Mammary epithelial cell (primary cell): ENCODE measurements at regions of chr2 and their contacts with region 1.

Region 1: DNA sequence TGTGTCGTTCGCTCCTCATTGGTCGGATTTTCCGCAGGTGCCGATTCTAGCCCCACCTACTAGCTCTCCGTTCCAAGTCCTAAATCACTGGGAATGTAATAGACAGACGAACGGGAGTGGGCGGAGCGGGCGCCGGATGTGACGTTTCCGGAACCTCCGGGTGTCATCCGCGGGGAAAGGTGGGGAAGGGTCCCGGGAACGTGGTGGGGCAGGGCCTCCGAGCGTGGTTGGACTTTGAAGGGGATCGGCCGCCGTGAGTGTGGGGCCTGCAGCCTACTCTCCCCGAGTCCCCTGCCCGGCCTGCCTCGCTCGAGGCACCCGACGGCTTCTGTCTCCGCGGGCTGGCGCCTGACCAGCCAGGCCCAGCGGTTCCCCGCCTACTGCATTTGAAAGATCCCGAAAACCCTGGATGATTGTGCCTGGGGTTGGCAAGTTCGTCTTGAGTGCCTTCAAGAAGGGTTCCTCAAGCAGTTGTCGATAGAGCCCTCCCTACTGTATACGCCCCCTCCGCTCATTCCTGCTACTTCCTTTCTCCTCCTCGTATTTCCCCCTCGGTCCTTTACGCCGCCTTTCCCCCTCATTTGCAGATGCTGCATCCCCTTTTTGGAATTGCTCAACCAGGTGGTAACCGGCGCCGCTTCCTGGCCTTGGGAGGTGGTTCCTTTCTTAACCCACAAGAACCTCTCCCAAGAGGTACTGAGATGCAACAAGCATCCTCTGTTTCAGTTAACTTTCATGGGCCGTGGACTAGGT is at the start of gene STAMBP:
- DNase-seq: peak; percentile 94
- H3K4me3 ChIP-seq: peak within 1 kb of the TSS; percentile 70 to 85 (median 81)
- H3K27ac ChIP-seq: peak within 1 kb of the TSS; percentile 94
- H3K4me1 ChIP-seq: peaks cover 26% of the 10 kb centered on the region
- H3K27me3 ChIP-seq: no peaks in the 10 kb centered on the region
- CTCF ChIP-seq: no peak
- total RNA-seq, gene STAMBP: 52.2 to 77.8 TPM

Region 2: GRCh38 chr2:73926493-73927338 is 97.7 kb after region 1 on chr2 and contains the start of gene DGUOK:
- CTCF ChIA-PET with region 1: no interaction called
- dilution Hi-C with region 1: no loop called
- in situ Hi-C with region 1: no loop called
- intact Hi-C with region 1: loop called (anchors 2 kb)
- DNase-seq: peak; percentile 99
- H3K4me3 ChIP-seq: peak within 1 kb of the TSS; percentile 60 to 79 (median 68)
- H3K27ac ChIP-seq: peak within 1 kb of the TSS; percentile 97
- H3K4me1 ChIP-seq: peaks cover 44% of the 10 kb centered on the region
- H3K27me3 ChIP-seq: no peaks in the 10 kb centered on the region
- CTCF ChIP-seq: no peak
- total RNA-seq, gene DGUOK: 56.3 to 78.2 TPM

Region 3: GRCh38 chr2:74020702-74021406 is 191.9 kb after region 1 on chr2:
- CTCF ChIA-PET with region 1: no interaction called
- dilution Hi-C with region 1: no loop called
- in situ Hi-C with region 1: no loop called
- intact Hi-C with region 1: no loop called
- DNase-seq: no peak
- H3K4me3 ChIP-seq: no peak overlapping the region
- H3K27ac ChIP-seq: no peak overlapping the region
- H3K4me1 ChIP-seq: no peaks in the 10 kb centered on the region
- H3K27me3 ChIP-seq: no peaks in the 10 kb centered on the region
- CTCF ChIP-seq: no peak

Region 4: DNA sequence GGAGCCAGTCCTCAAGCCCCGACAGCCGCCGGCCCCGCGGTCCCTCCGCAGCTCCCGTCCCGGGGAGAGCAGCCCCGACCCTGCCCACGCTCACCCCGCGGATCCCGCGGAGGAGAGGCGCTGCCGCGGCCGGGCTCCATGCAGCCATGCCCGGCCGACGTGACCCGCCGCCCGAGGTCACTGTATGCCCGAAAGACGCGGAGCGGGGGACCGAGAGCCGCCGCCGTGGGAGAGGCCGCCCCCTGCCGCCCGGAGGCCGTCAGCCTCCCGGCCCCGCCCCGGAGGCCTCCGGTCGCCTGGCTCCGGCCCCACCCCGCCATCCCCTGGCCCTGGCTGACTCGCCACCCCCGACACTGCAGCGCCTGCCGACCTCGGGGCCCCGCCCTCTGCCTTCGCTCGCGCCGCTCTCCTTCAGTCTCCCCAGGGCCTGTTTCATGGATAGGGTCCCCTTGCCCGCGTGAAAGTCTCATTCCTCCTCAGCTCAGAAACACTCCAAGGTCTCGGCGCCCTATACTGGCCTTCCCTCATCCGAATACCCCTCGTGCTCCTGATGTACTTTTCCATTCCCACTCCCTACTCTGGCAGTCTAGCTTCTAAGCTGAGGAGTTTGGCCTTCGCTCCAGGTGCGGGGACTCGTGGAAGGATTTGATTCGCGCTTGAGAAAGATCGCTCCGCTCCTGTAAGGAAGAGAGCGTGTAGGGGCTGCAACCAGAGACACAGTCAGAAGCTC is 318.9 kb after region 1 on chr2 and contains the start of gene BOLA3:
- CTCF ChIA-PET with region 1: interaction called, 9 read pairs
- dilution Hi-C with region 1: no loop called
- in situ Hi-C with region 1: loop called (anchors 10 to 25 kb)
- intact Hi-C with region 1: loop called (anchors 1 kb)
- DNase-seq: peak; percentile 81
- H3K4me3 ChIP-seq: peak within 1 kb of the TSS; percentile 58 to 80 (median 66)
- H3K27ac ChIP-seq: peak within 1 kb of the TSS; percentile 66
- H3K4me1 ChIP-seq: peaks cover 16% of the 10 kb centered on the region
- H3K27me3 ChIP-seq: no peaks in the 10 kb centered on the region
- CTCF ChIP-seq: peak; percentile 23 to 52
- total RNA-seq, gene BOLA3: 20.5 to 80.6 TPM

Region 5: DNA sequence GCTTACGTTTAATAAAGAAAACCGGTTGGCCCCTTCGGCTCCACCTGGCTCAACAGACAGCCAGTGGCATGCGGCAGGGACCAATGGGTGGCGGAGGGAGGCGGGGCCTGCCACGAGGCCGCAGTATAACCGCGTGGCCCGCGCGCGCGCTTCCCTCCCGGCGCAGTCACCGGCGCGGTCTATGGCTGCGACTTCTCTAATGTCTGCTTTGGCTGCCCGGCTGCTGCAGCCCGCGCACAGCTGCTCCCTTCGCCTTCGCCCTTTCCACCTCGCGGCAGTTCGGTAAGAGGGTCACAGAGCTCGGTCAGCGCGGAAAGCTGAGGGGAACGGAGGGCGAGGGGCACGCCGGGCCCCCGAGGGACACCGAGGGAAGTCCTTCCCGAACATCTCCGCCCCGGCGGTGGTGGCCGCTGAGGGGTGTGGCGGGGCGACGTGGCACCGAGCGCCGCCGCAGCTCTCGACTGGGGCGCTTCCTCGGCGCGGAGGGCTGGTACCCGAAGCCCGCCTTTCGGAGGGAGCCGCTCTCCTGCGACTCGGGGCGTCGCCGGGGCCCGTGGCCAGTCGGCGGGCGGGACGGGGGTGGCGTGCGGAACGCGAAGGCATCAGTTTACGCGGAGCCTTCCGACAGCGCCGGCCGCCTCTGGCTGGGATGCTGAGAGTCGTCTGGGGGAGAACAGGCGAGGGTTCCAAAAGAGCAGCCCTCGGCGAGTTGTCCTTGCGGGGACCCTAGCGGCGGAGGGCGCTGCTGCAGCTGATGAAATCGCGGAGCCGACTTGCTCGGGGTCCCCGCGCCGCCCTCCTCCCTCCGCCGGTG is 369.7 kb after region 1 on chr2 and contains the start of gene MTHFD2:
- CTCF ChIA-PET with region 1: no interaction called
- dilution Hi-C with region 1: no loop called
- in situ Hi-C with region 1: no loop called
- intact Hi-C with region 1: loop called (anchors 2 kb)
- DNase-seq: peak; percentile 97
- H3K4me3 ChIP-seq: peak within 1 kb of the TSS; percentile 67 to 86 (median 72)
- H3K27ac ChIP-seq: peak within 1 kb of the TSS; percentile 87
- H3K4me1 ChIP-seq: peaks cover 15% of the 10 kb centered on the region
- H3K27me3 ChIP-seq: no peaks in the 10 kb centered on the region
- CTCF ChIP-seq: peak; percentile 66 to 87
- total RNA-seq, gene MTHFD2: 302 to 350 TPM

Region 6: GRCh38 chr2:74261204-74261864 is 432.3 kb after region 1 on chr2:
- CTCF ChIA-PET with region 1: no interaction called
- dilution Hi-C with region 1: no loop called
- in situ Hi-C with region 1: no loop called
- intact Hi-C with region 1: loop called (anchors 1 kb)
- DNase-seq: peak; percentile 28
- H3K4me3 ChIP-seq: no peak overlapping the region
- H3K27ac ChIP-seq: no peak overlapping the region
- H3K4me1 ChIP-seq: no peaks in the 10 kb centered on the region
- H3K27me3 ChIP-seq: no peaks in the 10 kb centered on the region
- CTCF ChIP-seq: peak; percentile 12 to 46

Region 7: GRCh38 chr2:74529357-74530238 is 700.6 kb after region 1 on chr2 and contains the starts of genes AUP1 and HTRA2:
- CTCF ChIA-PET with region 1: interaction called, 12 read pairs
- dilution Hi-C with region 1: no loop called
- in situ Hi-C with region 1: no loop called
- intact Hi-C with region 1: no loop called
- DNase-seq: peak; percentile 100
- H3K4me3 ChIP-seq: peak within 1 kb of the TSS; percentile 58 to 81 (median 66)
- H3K27ac ChIP-seq: peak within 1 kb of the TSS; percentile 79
- H3K4me1 ChIP-seq: peaks cover 38% of the 10 kb centered on the region
- H3K27me3 ChIP-seq: no peaks in the 10 kb centered on the region
- CTCF ChIP-seq: no peak
- total RNA-seq, gene AUP1: 67.5 to 111 TPM
- total RNA-seq, gene HTRA2: 29.2 to 30.8 TPM